A549 (cell line): ENCODE measurements at regions of chr9 and their contacts with region 1.

Region 1: DNA sequence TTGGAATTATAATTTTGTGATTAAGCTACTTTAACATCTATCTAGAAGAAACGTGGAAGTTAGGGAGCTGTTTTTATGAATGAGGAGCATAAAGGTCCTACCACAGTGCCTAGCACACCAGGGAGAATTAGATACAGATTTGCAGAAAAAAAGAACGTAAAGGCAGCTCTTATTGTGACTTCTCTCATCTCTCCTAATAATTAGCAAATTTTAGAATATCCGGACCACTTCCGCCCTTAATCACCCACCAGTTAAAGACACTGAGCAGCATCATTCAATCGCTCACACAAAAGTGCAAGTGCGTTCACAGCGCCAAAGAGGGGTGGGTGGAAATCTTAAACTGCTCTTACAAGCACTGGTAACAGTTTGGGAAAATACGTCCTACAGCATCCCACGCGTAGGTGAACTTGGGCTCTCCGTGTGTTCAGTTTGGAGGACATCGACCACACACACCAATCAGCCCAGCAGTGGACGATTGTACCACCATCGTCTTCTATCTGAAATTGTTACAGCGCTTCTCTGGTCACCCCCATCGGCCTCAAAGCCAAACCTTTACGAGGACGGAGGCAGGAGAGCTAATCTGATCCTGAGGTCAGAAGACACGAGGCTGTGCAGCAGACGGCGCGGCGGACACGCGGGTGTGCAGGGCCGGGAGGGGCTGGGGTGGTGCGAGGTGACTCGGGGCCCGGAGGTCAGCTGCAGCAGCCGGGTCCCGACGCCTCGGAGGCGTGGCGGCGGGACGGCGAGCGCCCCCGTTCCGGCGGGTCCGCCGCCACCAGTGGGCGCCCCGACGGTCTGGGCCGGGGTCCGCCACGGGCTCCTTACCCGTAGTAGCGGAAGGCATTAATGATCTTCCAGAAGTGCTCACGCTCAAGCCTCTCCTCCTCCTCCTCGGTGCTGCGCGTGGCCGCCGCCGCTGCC is 646 bp downstream of the CARNMT1 start:
- DNase-seq: peak; percentile 58 to 61
- ATAC-seq: peak; percentile 81 to 83
- H3K4me3 ChIP-seq: peak overlapping the region; percentile 84
- H3K27ac ChIP-seq: peak overlapping the region; percentile 99
- H3K4me1 ChIP-seq: peaks cover 15% of the 10 kb centered on the region; the same call in 2 of the 3 replicates
- CTCF ChIP-seq: no peak; the same call in 1 of the 3 replicates
- EP300 ChIP-seq: no peak
- POLR2A ChIP-seq: no peak
- RAD21 ChIP-seq: no peak

Region 2: DNA sequence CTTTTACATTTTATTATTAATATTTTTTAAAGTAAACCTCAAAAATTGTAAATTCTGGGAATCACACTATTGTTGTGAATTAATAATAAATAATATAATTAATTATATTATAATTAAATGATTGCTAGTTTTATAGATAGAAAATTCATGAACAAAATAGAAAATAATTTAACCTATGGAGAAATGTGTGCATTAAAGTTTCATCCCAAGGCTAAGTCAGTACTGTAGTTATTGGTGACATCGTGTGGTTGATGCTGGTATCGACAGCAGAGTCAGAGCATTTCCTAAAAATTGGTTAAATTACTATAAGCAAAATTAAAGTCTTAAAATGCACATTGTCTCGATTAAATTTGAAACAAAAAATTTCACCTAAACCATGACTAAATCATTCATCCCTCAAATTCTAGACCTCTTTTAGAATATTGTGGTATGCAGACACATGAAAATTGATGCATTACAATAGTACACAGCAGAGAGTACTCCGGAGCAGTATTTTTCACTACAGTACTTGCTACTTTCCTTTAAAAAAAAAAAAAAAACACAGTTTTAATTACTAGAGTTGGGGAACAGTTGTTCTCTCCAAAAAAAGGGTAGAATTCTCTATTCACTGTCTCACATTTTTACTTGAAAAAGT is 456.5 kb before region 1 on chr9:
- CTCF ChIA-PET with region 1: no interaction called
- POLR2A ChIA-PET with region 1: no interaction called
- DNase-seq: peak; percentile 9 to 31
- ATAC-seq: peak in 1 of 2 experiments; percentile 46; a peak in 1 of 6 replicates
- H3K4me3 ChIP-seq: no peak overlapping the region
- H3K27ac ChIP-seq: no peak overlapping the region
- H3K4me1 ChIP-seq: no peaks in the 10 kb centered on the region
- CTCF ChIP-seq: peak; percentile 73
- EP300 ChIP-seq: no peak
- POLR2A ChIP-seq: no peak
- RAD21 ChIP-seq: peak; percentile 70 to 72

Region 3: GRCh38 chr9:74755355-74755754 is 272.1 kb before region 1 on chr9:
- CTCF ChIA-PET with region 1: no interaction called
- POLR2A ChIA-PET with region 1: no interaction called
- DNase-seq: no peak
- ATAC-seq: no peak
- H3K4me3 ChIP-seq: no peak overlapping the region
- H3K27ac ChIP-seq: no peak overlapping the region
- H3K4me1 ChIP-seq: peaks cover 9% of the 10 kb centered on the region
- CTCF ChIP-seq: no peak
- EP300 ChIP-seq: no peak
- POLR2A ChIP-seq: no peak
- RAD21 ChIP-seq: no peak

Region 4: GRCh38 chr9:74977287-74977686 is 50.2 kb before region 1 on chr9:
- CTCF ChIA-PET with region 1: no interaction called
- POLR2A ChIA-PET with region 1: no interaction called
- DNase-seq: no peak
- ATAC-seq: no peak
- H3K4me3 ChIP-seq: no peak overlapping the region
- H3K27ac ChIP-seq: no peak overlapping the region
- H3K4me1 ChIP-seq: no peaks in the 10 kb centered on the region
- CTCF ChIP-seq: no peak
- EP300 ChIP-seq: no peak
- POLR2A ChIP-seq: no peak
- RAD21 ChIP-seq: no peak

Region 5: GRCh38 chr9:75001719-75002422 is 25.6 kb before region 1 on chr9:
- CTCF ChIA-PET with region 1: interaction called, 24 read pairs
- POLR2A ChIA-PET with region 1: interaction called, 3 read pairs
- DNase-seq: peak; percentile 21 to 86
- ATAC-seq: peak; percentile 97 to 98
- H3K4me3 ChIP-seq: no peak overlapping the region
- H3K27ac ChIP-seq: no peak overlapping the region
- H3K4me1 ChIP-seq: no peaks in the 10 kb centered on the region
- CTCF ChIP-seq: peak; percentile 94
- EP300 ChIP-seq: no peak
- POLR2A ChIP-seq: no peak
- RAD21 ChIP-seq: peak; percentile 80 to 88

Region 6: DNA sequence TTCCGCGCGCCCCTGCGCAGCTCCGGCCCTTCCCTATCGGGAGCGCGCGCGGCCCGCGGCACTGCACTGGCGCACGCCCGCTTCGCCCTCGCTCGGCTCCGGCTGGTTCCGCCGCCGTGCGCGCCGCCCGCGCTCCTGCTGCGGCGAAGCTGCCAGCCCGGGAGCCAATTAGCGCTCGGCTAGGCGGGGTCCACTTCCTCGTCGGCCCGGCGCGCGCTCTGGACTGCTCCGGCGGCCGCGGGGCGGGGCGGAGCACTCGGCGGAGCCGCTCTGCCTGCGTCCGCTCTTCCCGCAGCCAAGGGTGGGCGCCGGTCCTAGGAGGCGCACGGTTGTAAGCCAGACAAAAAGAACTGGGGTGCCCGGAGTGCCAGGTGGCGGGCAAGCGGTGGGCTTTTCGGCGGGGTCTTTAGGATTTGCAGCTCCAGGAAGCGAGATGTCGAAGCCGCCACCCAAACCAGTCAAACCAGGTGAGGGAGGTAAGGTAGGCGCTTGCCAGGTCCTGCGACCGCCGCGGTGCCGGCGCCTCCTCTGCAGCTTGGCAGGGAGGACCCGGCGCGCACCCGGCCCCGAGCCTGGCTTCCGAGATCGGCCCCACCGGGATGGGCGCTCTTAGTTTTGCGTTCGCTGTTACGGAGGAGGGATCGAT is 60.9 kb after region 1 on chr9 and contains the start of gene OSTF1:
- CTCF ChIA-PET with region 1: interaction called, 9 read pairs
- POLR2A ChIA-PET with region 1: interaction called, 38 read pairs
- DNase-seq: peak; percentile 92 to 93
- ATAC-seq: peak; percentile 93 to 95
- H3K4me3 ChIP-seq: peak within 1 kb of the TSS; percentile 95
- H3K27ac ChIP-seq: peak within 1 kb of the TSS; percentile 78 to 86
- H3K4me1 ChIP-seq: peaks cover 8% of the 10 kb centered on the region
- CTCF ChIP-seq: no peak
- EP300 ChIP-seq: no peak
- POLR2A ChIP-seq: peak; percentile 70
- RAD21 ChIP-seq: no peak
- polyA plus RNA-seq, gene OSTF1: 10.1 and 12.7 TPM in 2 replicates